IMR-90 (cell line): ENCODE measurements at regions of chr18 and their contacts with region 1.

Region 1: GRCh38 chr18:2906704-2907549 is 60.1 kb downstream of the EMILIN2 start:
- DNase-seq: no peak
- ATAC-seq: peak; percentile 54
- H3K4me3 ChIP-seq: peak overlapping the region; percentile 35
- H3K27ac ChIP-seq: no peak overlapping the region
- H3K4me1 ChIP-seq: peaks cover 2% of the 10 kb centered on the region; the same call in 1 of the 2 replicates
- H3K27me3 ChIP-seq: peaks cover 40% of the 10 kb centered on the region
- CTCF ChIP-seq: peak; percentile 16; the same call in 1 of the 2 replicates
- POLR2A ChIP-seq: no peak
- RAD21 ChIP-seq: no peak

Region 2: GRCh38 chr18:2706903-2707302 is 200.0 kb before region 1 on chr18:
- CTCF ChIA-PET with region 1: no interaction called
- POLR2A ChIA-PET with region 1: no interaction called
- dilution Hi-C with region 1: no loop called
- in situ Hi-C with region 1: no loop called
- intact Hi-C with region 1: no loop called
- DNase-seq: no peak
- ATAC-seq: no peak
- H3K4me3 ChIP-seq: no peak overlapping the region
- H3K27ac ChIP-seq: peak overlapping the region; percentile 23; the same call in 1 of the 2 replicates
- H3K4me1 ChIP-seq: peaks cover 2% of the 10 kb centered on the region; the same call in 1 of the 2 replicates
- H3K27me3 ChIP-seq: no peaks in the 10 kb centered on the region
- CTCF ChIP-seq: no peak
- POLR2A ChIP-seq: no peak
- RAD21 ChIP-seq: no peak

Region 3: GRCh38 chr18:2805970-2806943 is 100.7 kb before region 1 on chr18:
- CTCF ChIA-PET with region 1: no interaction called
- POLR2A ChIA-PET with region 1: no interaction called
- dilution Hi-C with region 1: no loop called
- in situ Hi-C with region 1: no loop called
- intact Hi-C with region 1: loop called (anchors 5 kb)
- DNase-seq: peak; percentile 73
- ATAC-seq: peak; percentile 92
- H3K4me3 ChIP-seq: no peak overlapping the region
- H3K27ac ChIP-seq: peak overlapping the region; percentile 70; the same call in 1 of the 2 replicates
- H3K4me1 ChIP-seq: peaks cover 8% of the 10 kb centered on the region
- H3K27me3 ChIP-seq: no peaks in the 10 kb centered on the region
- CTCF ChIP-seq: no peak
- POLR2A ChIP-seq: no peak
- RAD21 ChIP-seq: no peak

Region 4: DNA sequence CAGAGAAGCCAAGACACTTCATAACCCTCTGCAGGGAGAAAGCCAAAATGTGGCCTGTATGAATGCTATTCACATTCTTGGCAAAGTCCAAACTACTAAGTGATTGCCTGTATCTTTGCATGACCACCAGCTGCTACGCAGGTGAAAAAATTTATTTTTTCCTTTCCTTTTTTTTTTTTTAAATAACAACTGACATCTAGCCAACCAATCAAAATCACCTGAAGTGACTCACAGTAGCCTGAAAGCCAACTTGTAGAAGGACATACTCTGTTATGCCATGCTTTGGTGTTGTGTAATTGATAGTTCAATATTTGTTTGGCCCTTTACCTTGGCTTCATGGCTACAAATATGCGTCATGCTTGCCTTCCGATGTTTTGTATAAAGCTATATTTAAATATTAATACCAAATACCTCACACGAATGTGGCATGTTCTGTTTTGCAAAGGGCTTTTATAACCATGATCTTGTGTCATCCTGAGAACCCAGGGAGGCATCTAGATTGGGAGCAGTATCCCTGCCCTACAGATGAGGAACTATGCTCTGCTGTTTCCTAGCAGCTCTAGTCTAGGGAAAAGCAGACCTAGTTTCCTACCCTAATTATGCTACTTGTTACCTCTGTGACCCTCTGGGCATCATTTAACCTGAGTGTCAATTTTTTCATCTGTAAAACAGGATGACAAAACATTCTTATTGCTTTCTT is 210.7 kb after region 1 on chr18:
- CTCF ChIA-PET with region 1: no interaction called
- POLR2A ChIA-PET with region 1: no interaction called
- dilution Hi-C with region 1: no loop called
- in situ Hi-C with region 1: no loop called
- intact Hi-C with region 1: no loop called
- DNase-seq: no peak
- ATAC-seq: no peak
- H3K4me3 ChIP-seq: no peak overlapping the region
- H3K27ac ChIP-seq: no peak overlapping the region
- H3K4me1 ChIP-seq: no peaks in the 10 kb centered on the region
- H3K27me3 ChIP-seq: peaks cover 9% of the 10 kb centered on the region
- CTCF ChIP-seq: no peak
- POLR2A ChIP-seq: no peak
- RAD21 ChIP-seq: no peak

Region 5: GRCh38 chr18:3186678-3187658 is 280.0 kb after region 1 on chr18:
- CTCF ChIA-PET with region 1: no interaction called
- POLR2A ChIA-PET with region 1: interaction called, 21 read pairs
- dilution Hi-C with region 1: no loop called
- in situ Hi-C with region 1: no loop called
- intact Hi-C with region 1: no loop called
- DNase-seq: no peak
- ATAC-seq: no peak
- H3K4me3 ChIP-seq: no peak overlapping the region
- H3K27ac ChIP-seq: no peak overlapping the region
- H3K4me1 ChIP-seq: no peaks in the 10 kb centered on the region
- H3K27me3 ChIP-seq: peaks cover 2% of the 10 kb centered on the region; the same call in 1 of the 2 replicates
- CTCF ChIP-seq: peak; percentile 5; the same call in 1 of the 2 replicates
- POLR2A ChIP-seq: no peak
- RAD21 ChIP-seq: no peak